ENCODE measurements at regions of chr1 and their contacts with region 1.

Region 1: GRCh38 chr1:165914136-165914798 is 86.9 kb downstream of the UCK2 start:
- DNase-seq: peak in 1 of 2 donors; percentile 63
- ATAC-seq: peak in 7 of 8 donors; percentile 65 to 81 (median 78)
- H3K4me3 ChIP-seq: no peak overlapping the region
- H3K27ac ChIP-seq: no peak overlapping the region
- H3K4me1 ChIP-seq: peaks cover 0 to 26% (median 16%) of the 10 kb centered on the region in 9 donors
- H3K27me3 ChIP-seq: no peaks in the 10 kb centered on the region
- CTCF ChIP-seq: peak; percentile 67 to 93 (median 85)

Region 2: DNA sequence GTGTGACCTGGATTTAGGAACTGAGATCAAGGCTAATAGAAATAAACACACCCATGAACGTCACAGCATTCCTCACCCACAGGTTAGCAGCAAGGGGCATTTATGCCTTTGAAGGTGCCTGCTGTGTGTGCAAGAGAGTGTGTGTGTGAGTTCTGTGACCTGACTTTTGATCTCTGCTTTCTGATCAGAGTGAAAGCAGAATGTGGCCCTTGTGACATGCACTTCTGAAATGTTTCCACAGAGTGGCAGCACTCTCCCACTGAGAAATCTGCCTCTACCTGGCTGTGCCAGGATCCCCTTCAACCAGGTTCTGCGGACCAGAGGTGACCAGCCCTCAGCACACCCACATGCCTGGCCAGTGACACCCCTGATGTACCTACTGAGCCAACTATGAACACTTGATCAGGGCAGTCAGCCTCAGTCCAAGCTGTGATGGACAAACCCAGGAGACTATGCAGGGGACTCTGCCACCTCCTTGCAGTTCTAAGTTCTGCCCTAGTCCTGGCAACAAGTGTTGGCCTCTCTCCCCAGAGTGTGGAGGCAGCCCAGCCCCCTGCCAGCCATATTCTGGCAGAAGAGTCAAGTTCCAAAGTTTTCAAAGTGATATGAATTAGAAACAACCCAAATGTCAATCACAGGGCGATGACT is 510.3 kb before region 1 on chr1:
- intact Hi-C with region 1: loop called in 6 of 10 experiments (anchors 5 to 10 kb)
- DNase-seq: peak in 1 of 2 donors; percentile 24
- ATAC-seq: peak; percentile 25 to 68 (median 57)
- H3K4me3 ChIP-seq: no peak overlapping the region
- H3K27ac ChIP-seq: no peak overlapping the region
- H3K4me1 ChIP-seq: peaks cover 0 to 12% (median 0%) of the 10 kb centered on the region in 9 donors
- H3K27me3 ChIP-seq: peaks cover 0 to 52% (median 0%) of the 10 kb centered on the region in 7 donors
- CTCF ChIP-seq: peak; percentile 44 to 75 (median 71)

Region 3: DNA sequence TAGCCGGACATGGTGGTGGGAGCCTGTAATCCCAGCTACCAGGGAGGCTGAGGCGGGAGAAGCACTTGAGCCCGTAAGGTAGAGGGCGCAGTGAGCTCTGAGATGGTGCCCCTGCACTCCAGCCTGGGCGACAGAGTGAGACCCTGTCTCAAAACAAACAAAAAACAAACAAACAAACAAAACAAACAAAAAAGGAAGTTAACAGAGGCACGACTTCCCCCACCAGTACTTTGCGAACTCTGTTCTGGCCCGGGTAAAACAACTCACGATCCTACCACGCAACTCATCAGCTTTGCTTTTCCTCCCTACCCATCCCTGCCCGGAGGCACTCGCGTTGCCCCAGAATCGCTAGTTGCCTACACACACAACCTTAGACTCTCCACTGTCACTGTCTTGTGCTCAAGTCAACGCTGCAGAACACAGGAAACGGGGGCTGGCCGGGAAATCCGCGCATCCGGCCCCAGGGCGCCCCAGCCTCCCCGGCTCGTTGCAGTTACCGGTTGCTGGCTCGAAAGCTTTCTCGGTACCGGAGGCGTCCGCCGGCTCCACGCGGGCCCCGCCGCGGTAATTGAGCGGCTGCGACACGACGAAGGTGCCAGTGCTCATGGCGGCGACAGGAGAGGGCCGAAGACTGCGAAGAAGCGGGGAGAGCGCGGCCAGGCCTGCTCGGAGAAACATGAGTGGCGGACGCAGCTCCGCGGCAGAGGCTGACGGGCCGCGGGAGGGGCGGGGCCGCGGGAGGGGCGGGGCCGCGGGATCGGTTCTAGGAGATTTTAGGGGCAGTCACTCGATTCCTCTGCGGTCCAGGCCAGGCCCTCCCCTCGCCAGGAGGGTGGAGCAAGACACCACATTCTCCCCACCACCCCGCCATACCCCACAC is 216.1 kb before region 1 on chr1 and contains the start of gene ALDH9A1:
- intact Hi-C with region 1: loop called in 1 of 10 experiments (anchors 5 kb)
- DNase-seq: peak; percentile 90 to 92
- ATAC-seq: peak; percentile 97 to 99 (median 97)
- H3K4me3 ChIP-seq: peak within 1 kb of the TSS; percentile 39 to 92 (median 81)
- H3K27ac ChIP-seq: peak within 1 kb of the TSS; percentile 92 to 99 (median 95)
- H3K4me1 ChIP-seq: peaks cover 4 to 39% (median 22%) of the 10 kb centered on the region in 9 donors
- H3K27me3 ChIP-seq: no peaks in the 10 kb centered on the region
- CTCF ChIP-seq: peak in 7 of 9 donors; percentile 17 to 59 (median 42)
- total RNA-seq, gene ALDH9A1: 47.3 to 75.3 (median 66.2) TPM

Region 4: GRCh38 chr1:165768513-165769394 is 145.5 kb before region 1 on chr1 and contains the start of gene TMCO1:
- intact Hi-C with region 1: loop called in 3 of 10 experiments (anchors 5 kb)
- DNase-seq: peak; percentile 88 to 96
- ATAC-seq: peak; percentile 99 to 100 (median 100)
- H3K4me3 ChIP-seq: peak within 1 kb of the TSS; percentile 45 to 99 (median 77)
- H3K27ac ChIP-seq: peak within 1 kb of the TSS; percentile 18 to 95 (median 89)
- H3K4me1 ChIP-seq: peaks cover 0 to 61% (median 31%) of the 10 kb centered on the region in 9 donors
- H3K27me3 ChIP-seq: no peaks in the 10 kb centered on the region
- CTCF ChIP-seq: peak in 6 of 9 donors; percentile 14 to 45 (median 34)
- total RNA-seq, gene TMCO1: 41.1 to 61.3 (median 48.4) TPM

Region 5: DNA sequence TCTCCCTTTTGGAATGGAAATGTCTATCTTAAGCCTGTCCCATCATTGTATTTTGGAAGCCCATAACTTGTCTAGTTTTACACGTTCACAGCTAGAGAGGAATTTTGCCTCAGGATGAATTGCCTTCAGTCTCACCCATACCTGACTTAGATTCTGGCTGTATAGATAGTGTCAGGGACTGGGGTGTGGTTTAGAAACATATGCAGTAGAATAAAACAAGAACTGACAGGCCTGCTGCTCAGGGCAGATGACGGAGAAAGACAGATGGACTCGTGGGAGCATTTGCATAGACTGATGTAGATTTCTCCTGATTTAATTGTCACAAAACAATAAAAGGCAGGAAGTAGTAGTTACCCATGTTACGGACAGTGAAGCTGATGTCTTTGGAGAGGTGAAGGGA is 79.8 kb after region 1 on chr1:
- intact Hi-C with region 1: no loop called
- DNase-seq: no peak
- ATAC-seq: no peak
- H3K4me3 ChIP-seq: no peak overlapping the region
- H3K27ac ChIP-seq: no peak overlapping the region
- H3K4me1 ChIP-seq: no peaks in the 10 kb centered on the region
- H3K27me3 ChIP-seq: no peaks in the 10 kb centered on the region
- CTCF ChIP-seq: no peak

Region 6: DNA sequence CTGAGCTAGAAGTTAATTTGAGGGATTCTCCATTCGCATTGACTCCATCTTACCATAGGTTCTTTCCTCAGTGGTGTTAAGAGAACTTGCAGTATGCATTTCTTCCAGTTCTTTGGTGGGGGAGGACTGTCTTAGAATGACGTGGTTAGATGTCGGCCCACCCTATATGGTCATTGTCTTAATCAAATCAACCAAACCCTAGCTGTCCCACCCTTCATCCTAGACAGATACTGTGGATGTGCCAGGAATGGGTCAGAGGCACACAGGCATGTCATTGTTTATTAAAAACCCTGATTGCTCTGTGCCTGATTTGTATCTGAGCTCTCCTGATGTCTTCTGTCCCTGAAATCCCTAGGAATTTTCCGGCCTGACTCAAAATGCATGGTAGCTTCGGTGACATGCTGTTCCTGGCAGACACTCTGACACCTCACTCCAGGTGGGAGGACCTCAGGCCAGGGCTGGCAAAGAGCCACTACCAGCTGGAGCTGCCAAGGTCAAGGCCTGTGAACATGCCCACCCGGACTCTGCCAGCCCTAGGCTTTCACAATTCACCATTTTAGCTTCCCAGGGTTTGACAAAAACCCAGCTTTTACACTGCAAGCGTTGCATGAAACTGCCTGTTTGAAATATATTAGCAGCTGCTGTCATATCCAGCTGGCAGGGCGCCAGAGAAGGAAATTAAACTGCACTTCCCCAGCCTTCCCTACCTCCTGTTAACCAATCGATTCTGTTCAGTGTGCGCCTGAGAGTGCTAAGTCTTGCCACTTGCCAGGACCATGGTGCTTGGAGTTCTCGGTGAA is 118.5 kb after region 1 on chr1:
- intact Hi-C with region 1: no loop called
- DNase-seq: peak in 1 of 2 donors; percentile 15
- ATAC-seq: no peak
- H3K4me3 ChIP-seq: no peak overlapping the region
- H3K27ac ChIP-seq: no peak overlapping the region
- H3K4me1 ChIP-seq: peaks cover 0 to 27% (median 5%) of the 10 kb centered on the region in 9 donors
- H3K27me3 ChIP-seq: no peaks in the 10 kb centered on the region
- CTCF ChIP-seq: no peak